ENCODE measurements at regions of chr7 and their contacts with region 1.

Region 1: DNA sequence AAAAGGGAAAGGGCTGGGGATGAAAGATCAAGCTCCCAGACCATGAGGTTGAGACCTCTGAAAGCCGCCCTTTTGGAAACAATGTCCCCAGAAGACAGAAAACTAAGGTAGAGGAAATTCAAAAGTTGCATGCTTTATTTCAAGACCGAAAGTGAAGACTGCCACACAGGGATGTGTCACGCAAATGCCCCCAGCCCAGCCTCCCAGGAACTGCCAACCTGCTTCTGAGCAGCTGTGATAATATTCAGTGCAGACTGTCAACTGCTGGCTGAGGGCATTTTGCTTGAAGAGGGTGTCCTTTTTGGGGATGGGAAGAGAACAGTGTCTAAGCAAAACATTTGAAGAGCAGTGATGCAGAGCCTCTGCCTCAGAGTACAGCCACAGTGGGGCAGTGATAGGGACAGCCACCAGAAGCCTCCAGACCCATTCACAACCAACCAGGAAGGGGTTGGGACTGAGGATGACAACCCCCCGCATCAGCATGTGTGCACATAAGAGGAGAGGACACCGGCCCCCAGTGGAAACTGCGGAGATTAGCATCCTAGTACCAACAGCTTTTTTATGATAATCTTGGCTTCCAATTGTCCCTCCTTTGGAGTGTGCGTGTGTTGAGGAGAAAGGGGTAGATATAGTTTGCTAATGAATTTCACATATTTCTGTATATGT is 34.7 kb upstream of the NFE2L3 start:
- DNase-seq: no peak
- H3K4me3 ChIP-seq: no peak overlapping the region
- H3K27ac ChIP-seq: no peak overlapping the region
- H3K4me1 ChIP-seq: no peaks in the 10 kb centered on the region
- H3K27me3 ChIP-seq: no peaks in the 10 kb centered on the region
- CTCF ChIP-seq: no peak

Region 2: DNA sequence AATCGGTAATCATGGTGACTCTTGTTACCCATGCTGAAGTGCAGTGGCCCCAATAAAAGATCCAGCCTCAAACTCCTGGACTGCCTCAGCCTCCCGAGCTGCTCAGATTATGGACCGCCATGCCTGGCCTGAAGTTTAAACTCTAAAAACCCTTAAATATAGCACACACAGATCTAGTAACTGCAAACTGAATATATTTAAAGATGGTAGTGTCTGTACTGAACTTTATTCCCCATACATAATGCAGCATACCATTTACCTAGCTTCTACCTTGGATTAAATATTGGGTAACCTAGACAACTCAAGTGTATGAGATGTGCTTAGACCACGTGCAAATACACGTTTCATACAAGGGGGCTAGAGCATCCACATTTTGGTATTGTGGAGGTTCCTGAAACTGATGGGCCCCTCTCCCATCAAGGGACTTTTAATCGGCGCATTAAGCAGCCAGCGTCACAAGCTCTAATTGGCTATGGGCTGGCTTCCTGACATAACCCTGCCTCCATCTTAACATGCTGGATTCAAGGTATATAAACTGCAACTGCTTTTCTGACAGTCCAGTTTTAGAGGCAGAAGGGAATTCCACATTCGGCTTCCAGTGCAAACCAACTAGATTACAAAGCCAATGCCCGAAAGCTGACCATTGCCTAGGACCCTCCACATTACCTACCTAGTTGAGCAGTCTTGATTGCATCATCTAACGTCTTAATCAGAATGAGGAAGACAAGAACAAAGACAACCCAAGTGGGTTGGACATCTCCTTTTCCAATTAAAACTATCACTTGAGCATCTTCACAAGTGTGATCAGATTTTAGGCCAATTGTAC is 70.3 kb after region 1 on chr7:
- CTCF ChIA-PET with region 1: no interaction called
- dilution Hi-C with region 1: loop called (anchors 10 kb)
- in situ Hi-C with region 1: no loop called
- intact Hi-C with region 1: no loop called
- DNase-seq: no peak
- H3K4me3 ChIP-seq: no peak overlapping the region
- H3K27ac ChIP-seq: no peak overlapping the region
- H3K4me1 ChIP-seq: no peaks in the 10 kb centered on the region
- H3K27me3 ChIP-seq: no peaks in the 10 kb centered on the region
- CTCF ChIP-seq: no peak